CD14-positive monocyte (primary cell): ENCODE measurements at regions of chr10 and their contacts with region 1.

Region 1: GRCh38 chr10:119596537-119597404 is at the start of gene TIAL1:
- DNase-seq: peak; percentile 96 to 98 (median 97)
- H3K4me3 ChIP-seq: peak within 1 kb of the TSS; percentile 56 to 99 (median 93)
- H3K4me3 Mint-ChIP-seq: peak within 1 kb of the TSS; percentile 95 to 98
- H3K27ac ChIP-seq: peak within 1 kb of the TSS; percentile 92 to 99
- H3K27ac Mint-ChIP-seq: peak within 1 kb of the TSS; percentile 97 to 99 (median 98)
- H3K4me1 ChIP-seq: peaks cover 41 to 52% of the 10 kb centered on the region in 2 donors
- H3K4me1 Mint-ChIP-seq: peaks cover 46% of the 10 kb centered on the region
- H3K27me3 ChIP-seq: no peaks in the 10 kb centered on the region
- H3K27me3 Mint-ChIP-seq: no peaks in the 10 kb centered on the region
- CTCF ChIP-seq: no peak
- polyA plus RNA-seq, gene TIAL1: 6.7 to 118 (median 7.2) TPM

Region 2: DNA sequence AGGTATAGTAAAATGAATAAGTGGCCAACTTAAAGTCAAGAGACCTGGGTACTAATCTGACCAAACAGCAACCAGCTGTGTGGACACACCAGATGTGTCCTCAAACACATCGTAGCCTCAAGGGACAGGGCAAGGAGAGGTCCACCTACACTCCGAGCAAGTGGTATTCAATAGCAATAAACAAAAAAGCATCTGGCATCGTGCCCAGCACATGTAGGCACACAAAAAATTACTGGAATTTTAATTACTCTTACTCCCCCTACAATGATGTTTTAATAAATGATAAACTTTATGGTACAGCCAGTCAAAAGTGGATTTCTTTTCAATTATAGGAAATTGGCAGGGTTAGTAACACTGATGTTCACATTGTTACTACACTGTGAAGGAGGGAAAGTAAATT is 50.8 kb before region 1 on chr10:
- intact Hi-C with region 1: no loop called
- DNase-seq: no peak
- H3K4me3 ChIP-seq: no peak overlapping the region
- H3K4me3 Mint-ChIP-seq: no peak overlapping the region
- H3K27ac ChIP-seq: no peak overlapping the region
- H3K27ac Mint-ChIP-seq: peak overlapping the region in 1 of 7 donors; percentile 51
- H3K4me1 ChIP-seq: peaks cover 11 to 22% of the 10 kb centered on the region in 2 donors
- H3K4me1 Mint-ChIP-seq: peaks cover 15% of the 10 kb centered on the region
- H3K27me3 ChIP-seq: peaks cover 0 to 11% of the 10 kb centered on the region in 2 donors
- H3K27me3 Mint-ChIP-seq: peaks cover 19 to 21% (median 19%) of the 10 kb centered on the region in 3 donors
- CTCF ChIP-seq: no peak

Region 3: GRCh38 chr10:119650692-119651513 is 54.1 kb after region 1 on chr10 and contains the start of gene BAG3:
- intact Hi-C with region 1: loop called in 1 of 2 experiments (anchors 5 kb)
- DNase-seq: peak; percentile 83 to 88 (median 87)
- H3K4me3 ChIP-seq: peak within 1 kb of the TSS; percentile 75 to 92 (median 80)
- H3K4me3 Mint-ChIP-seq: peak within 1 kb of the TSS; percentile 96 to 97
- H3K27ac ChIP-seq: peak within 1 kb of the TSS; percentile 23 to 73
- H3K27ac Mint-ChIP-seq: peak within 1 kb of the TSS in 6 of 7 donors; percentile 59 to 90 (median 87)
- H3K4me1 ChIP-seq: peaks cover 8 to 30% of the 10 kb centered on the region in 2 donors
- H3K4me1 Mint-ChIP-seq: peaks cover 32% of the 10 kb centered on the region
- H3K27me3 ChIP-seq: peaks cover 5 to 19% of the 10 kb centered on the region in 2 donors
- H3K27me3 Mint-ChIP-seq: peaks cover 25 to 39% (median 34%) of the 10 kb centered on the region in 3 donors
- CTCF ChIP-seq: no peak
- polyA plus RNA-seq, gene BAG3: 1.0 to 10.2 (median 2.8) TPM

Region 4: GRCh38 chr10:119725828-119726675 is 129.3 kb after region 1 on chr10 and contains the start of gene INPP5F:
- intact Hi-C with region 1: loop called in 1 of 2 experiments (anchors 1 kb)
- DNase-seq: peak; percentile 96 to 99 (median 96)
- H3K4me3 ChIP-seq: peak within 1 kb of the TSS; percentile 69 to 84 (median 83)
- H3K4me3 Mint-ChIP-seq: peak within 1 kb of the TSS; percentile 84 to 94
- H3K27ac ChIP-seq: peak within 1 kb of the TSS; percentile 90 to 92
- H3K27ac Mint-ChIP-seq: peak within 1 kb of the TSS; percentile 88 to 98 (median 95)
- H3K4me1 ChIP-seq: peaks cover 30 to 35% of the 10 kb centered on the region in 2 donors
- H3K4me1 Mint-ChIP-seq: peaks cover 38% of the 10 kb centered on the region
- H3K27me3 ChIP-seq: no peaks in the 10 kb centered on the region
- H3K27me3 Mint-ChIP-seq: peaks cover 0 to 3% (median 2%) of the 10 kb centered on the region in 3 donors
- CTCF ChIP-seq: peak; percentile 32
- polyA plus RNA-seq, gene INPP5F: 5.1 to 6.9 (median 5.4) TPM

Region 5: DNA sequence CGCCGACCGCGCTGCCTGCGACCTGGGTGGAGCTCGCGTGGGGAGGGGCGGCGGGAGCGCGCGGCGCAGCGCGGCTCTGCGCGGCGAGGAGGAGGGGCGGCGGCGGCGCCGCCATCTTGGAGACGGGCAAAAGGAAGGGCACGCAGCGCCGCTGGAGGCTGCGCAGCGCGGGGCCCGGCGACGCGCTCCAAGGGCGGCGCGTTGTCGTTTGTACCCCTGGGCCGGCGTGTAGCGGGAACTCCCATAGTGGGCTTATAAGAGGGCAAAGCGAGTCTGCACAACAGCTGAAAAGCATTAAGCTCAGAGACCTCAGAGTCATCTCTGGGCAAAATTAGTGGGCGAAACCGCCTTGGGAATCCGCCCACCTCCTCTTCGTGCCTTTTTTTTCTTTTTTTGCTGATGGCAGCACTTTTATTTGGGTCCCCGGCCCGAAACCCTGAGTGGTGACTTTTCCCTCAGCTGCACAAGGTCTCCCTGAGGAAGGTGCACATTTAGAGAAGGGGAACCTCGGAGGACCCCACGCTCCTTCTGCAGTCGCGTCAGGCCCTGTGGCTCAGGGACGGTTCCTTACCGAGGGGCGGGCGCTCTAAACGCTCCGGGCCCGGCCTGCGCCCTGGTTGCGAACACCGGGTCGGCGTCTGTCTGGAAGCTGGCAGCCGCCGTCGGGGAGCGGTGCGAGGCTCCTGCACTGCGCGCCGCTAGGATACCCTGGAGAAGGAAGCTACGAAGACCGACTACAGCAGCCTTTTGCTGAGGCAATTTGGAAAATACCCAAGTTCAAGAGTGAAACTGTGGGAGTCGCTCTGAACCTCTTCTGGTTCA is 276.3 kb after region 1 on chr10:
- intact Hi-C with region 1: loop called (anchors 5 kb)
- DNase-seq: peak; percentile 80 to 83 (median 81)
- H3K4me3 ChIP-seq: peak overlapping the region; percentile 81 to 88 (median 87)
- H3K4me3 Mint-ChIP-seq: peak overlapping the region; percentile 87 to 95
- H3K27ac ChIP-seq: peak overlapping the region; percentile 80 to 89
- H3K27ac Mint-ChIP-seq: peak overlapping the region; percentile 91 to 99 (median 95)
- H3K4me1 ChIP-seq: peaks cover 31 to 49% of the 10 kb centered on the region in 2 donors
- H3K4me1 Mint-ChIP-seq: peaks cover 47% of the 10 kb centered on the region
- H3K27me3 ChIP-seq: no peaks in the 10 kb centered on the region
- H3K27me3 Mint-ChIP-seq: no peaks in the 10 kb centered on the region
- CTCF ChIP-seq: no peak

Region 6: GRCh38 chr10:119892188-119893065 is 295.7 kb after region 1 on chr10 and contains the start of gene SEC23IP:
- intact Hi-C with region 1: loop called (anchors 5 to 10 kb)
- DNase-seq: peak; percentile 95 to 97 (median 96)
- H3K4me3 ChIP-seq: peak within 1 kb of the TSS; percentile 85 to 97 (median 87)
- H3K4me3 Mint-ChIP-seq: peak within 1 kb of the TSS; percentile 92 to 99
- H3K27ac ChIP-seq: peak within 1 kb of the TSS; percentile 76 to 94
- H3K27ac Mint-ChIP-seq: peak within 1 kb of the TSS; percentile 91 to 97 (median 93)
- H3K4me1 ChIP-seq: peaks cover 38 to 57% of the 10 kb centered on the region in 2 donors
- H3K4me1 Mint-ChIP-seq: peaks cover 53% of the 10 kb centered on the region
- H3K27me3 ChIP-seq: no peaks in the 10 kb centered on the region
- H3K27me3 Mint-ChIP-seq: peaks cover 0 to 1% (median 0%) of the 10 kb centered on the region in 3 donors
- CTCF ChIP-seq: no peak
- polyA plus RNA-seq, gene SEC23IP: 11.5 to 43.8 (median 42.0) TPM